ENCODE measurements at regions of chr6 and their contacts with region 1.

Region 1: DNA sequence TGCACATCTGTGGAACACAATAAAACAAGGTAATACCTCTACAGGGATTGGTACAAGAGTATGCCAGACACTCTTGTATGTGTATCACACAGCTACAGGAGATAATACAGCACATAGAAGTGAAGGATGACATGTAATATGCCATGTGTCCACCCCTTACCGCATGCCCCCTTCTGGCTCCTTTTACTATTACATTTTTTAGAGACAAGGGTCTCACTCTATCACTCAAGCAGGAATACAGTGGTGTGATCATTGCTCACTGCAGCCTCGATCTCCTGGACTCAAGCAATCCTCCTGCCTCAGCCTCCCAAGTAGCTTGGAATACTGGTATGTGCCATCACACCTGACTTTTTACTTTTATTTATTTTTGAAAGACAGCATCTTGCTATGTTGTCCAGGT is 4.2 kb upstream of the NCR3 start:
- DNase-seq: no peak

Region 2: GRCh38 chr6:31546962-31547726 is 49.9 kb before region 1 on chr6 and contains the start of gene NFKBIL1:
- intact Hi-C with region 1: loop called (anchors 2 kb)
- DNase-seq: peak; percentile 95 to 99 (median 98)

Measured in head of caudate nucleus (tissue), 42 donors.